Right ventricle myocardium inferior (tissue), 1 donor: ENCODE measurements at regions of chr12 and their contacts with region 1.

Region 1: DNA sequence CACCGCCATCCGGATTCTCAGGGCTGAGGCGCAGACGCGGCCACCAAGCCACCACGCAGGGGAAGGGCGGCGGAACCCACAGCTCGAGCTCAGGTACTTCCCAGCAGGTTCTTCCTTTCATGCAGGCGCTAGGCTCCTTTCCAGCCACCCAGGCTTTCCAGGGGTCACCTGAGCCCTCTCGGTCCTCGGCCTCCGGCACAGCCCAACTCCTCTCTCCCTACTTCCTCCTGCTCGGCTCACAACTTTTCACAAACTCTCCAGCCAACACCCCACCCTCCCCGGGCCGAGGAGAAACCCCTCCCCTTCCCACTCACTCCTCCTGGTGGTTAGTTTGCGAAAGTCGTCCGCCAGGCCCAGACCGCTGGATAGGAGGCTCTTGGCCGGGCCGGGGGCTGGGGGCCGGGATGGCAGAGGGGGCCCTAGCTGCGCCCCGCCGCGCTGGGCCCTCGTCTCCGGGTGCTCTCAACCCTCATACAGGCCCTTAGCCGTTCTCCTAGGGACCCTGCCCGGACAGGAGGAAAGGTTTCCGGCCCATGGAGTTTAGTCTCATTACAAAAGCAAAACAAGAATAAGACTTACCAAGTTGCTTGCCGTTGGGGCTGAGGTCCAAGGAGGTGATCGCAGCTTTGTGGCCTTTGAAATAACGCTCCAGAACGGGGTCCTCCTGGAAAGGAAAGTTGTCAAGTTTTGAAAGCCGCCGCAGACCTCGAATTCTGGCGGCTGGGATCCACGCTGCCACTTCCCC is at the start of gene GALNT4:
- DNase-seq: peak; percentile 94
- ATAC-seq: peak; percentile 96
- total RNA-seq, gene GALNT4: 2.3 TPM

Region 2: DNA sequence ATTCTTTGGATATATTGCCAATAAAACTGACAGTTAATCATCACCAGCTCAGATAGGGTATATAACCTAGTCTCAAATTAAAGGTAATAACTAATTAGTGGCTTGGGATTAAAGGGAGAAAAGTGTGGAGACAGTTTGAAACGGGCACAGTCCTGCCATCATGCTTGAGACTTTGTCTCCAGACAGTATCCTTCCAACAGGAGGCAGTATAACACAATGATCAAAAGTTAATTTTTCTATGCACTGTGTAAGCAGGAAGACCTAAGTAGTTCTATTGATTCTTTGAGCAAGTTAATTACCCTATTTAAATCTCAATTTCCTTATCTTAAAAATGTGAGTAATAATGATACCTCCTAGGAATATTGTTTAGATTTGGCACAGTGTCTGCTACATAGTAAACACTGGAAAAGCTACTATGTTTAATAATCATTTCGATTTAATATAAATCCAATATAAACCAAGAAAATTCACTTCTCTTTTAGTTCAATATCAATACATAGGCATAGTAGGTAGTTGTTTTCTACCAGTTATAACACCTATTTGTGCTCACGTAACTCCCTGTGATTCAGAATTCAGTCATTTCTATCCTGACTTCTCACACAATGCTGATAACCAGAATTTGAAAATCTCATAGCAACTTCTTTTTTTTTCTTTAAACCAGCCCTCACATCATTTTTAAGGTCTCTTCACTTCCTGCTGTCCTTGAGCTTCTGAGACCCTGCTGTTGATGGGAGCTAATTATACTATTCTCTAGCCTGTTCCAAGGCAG is 53.8 kb before region 1 on chr12:
- intact Hi-C with region 1: loop called (anchors 2 kb)
- DNase-seq: no peak
- ATAC-seq: peak; percentile 78

Region 3: DNA sequence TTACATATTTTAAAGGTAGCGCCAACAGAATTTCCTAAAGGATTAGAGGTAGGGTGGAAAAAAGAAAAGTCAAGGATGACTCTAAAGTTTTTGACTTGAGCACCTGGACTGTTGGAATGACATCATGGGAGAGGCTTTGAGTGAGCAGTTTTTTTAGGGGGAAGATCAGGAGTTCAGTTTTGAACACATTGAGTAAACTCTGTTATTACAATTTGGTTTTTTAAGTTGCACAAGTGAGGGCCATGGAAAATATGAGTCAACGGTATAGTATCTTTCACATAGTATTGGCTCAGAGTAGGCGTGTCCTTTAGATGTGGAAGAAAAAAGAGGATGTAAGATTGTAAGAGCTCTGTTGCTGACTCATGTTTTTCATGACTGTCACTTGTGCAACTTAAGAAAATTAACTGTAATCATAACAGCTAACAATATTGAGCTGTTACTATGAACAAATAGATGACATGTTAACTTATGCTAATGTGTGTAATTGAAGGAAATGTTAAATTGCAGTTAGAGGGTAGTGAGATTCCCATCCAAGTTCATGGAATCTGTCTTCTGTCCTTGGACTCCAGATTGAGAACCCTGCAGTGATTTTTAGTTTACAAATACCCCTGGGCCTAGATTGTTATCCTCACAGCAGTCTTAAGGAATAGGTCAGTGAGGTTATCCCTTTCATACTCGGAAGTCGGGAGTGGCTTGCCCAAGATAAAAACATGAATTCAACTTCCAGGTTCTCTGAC is 232.0 kb after region 1 on chr12:
- intact Hi-C with region 1: no loop called
- DNase-seq: no peak
- ATAC-seq: peak; percentile 64